Left ventricle myocardium inferior (tissue), 1 donor: ENCODE measurements at regions of chrX and their contacts with region 1.

Region 1: GRCh38 chrX:13487731-13488523 is 81.5 kb upstream of the EGFL6 start:
- DNase-seq: no peak
- H3K4me3 ChIP-seq: no peak overlapping the region
- H3K27ac ChIP-seq: peak overlapping the region; percentile 75
- H3K4me1 ChIP-seq: peaks cover 3% of the 10 kb centered on the region
- H3K27me3 ChIP-seq: no peaks in the 10 kb centered on the region
- CTCF ChIP-seq: peak; percentile 66

Region 2: DNA sequence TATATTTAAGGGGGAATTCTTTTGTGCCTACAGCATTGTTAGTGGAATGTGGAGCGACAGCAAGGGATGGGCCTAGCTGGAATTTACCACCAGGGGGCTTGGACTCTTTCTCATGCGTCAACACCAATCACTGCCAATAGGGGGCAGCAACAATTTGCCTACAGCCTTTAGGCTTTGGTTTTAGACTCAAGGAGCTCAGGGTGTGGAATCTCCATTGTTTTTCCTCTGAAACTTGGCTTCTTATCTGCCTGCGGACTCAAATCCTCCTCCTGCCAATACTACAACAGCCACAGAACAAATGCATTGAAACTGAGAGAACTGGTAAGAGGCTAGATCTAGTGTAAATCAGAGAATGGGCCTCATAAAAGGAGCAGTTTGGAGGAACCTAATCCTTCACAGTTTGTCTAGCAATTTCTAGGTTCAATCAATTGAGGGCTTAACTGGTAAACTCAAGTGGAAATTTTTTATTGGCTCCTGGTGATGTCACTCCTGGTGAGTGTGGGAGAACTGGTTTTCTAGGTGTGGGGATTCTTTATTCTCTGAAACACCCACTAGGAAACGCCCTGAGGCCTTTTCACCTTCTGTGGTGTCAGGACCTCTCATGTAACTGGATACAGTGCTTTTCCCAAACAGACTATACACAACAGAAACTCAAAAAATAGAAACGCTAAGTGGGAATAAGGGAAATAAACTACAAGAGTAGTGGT is 540.9 kb before region 1 on chrX:
- intact Hi-C with region 1: loop called (anchors 5 kb)
- DNase-seq: peak; percentile 40
- H3K4me3 ChIP-seq: no peak overlapping the region
- H3K27ac ChIP-seq: peak overlapping the region; percentile 66
- H3K4me1 ChIP-seq: peaks cover 15% of the 10 kb centered on the region
- H3K27me3 ChIP-seq: no peaks in the 10 kb centered on the region
- CTCF ChIP-seq: peak; percentile 82

Region 3: GRCh38 chrX:12974796-12975669 is 512.9 kb before region 1 on chrX and contains the start of gene TMSB4X:
- intact Hi-C with region 1: loop called (anchors 10 kb)
- DNase-seq: peak; percentile 83
- H3K4me3 ChIP-seq: peak within 1 kb of the TSS; percentile 80
- H3K27ac ChIP-seq: peak within 1 kb of the TSS; percentile 94
- H3K4me1 ChIP-seq: peaks cover 12% of the 10 kb centered on the region
- H3K27me3 ChIP-seq: no peaks in the 10 kb centered on the region
- CTCF ChIP-seq: no peak
- total RNA-seq, gene TMSB4X: 955 TPM

Region 4: DNA sequence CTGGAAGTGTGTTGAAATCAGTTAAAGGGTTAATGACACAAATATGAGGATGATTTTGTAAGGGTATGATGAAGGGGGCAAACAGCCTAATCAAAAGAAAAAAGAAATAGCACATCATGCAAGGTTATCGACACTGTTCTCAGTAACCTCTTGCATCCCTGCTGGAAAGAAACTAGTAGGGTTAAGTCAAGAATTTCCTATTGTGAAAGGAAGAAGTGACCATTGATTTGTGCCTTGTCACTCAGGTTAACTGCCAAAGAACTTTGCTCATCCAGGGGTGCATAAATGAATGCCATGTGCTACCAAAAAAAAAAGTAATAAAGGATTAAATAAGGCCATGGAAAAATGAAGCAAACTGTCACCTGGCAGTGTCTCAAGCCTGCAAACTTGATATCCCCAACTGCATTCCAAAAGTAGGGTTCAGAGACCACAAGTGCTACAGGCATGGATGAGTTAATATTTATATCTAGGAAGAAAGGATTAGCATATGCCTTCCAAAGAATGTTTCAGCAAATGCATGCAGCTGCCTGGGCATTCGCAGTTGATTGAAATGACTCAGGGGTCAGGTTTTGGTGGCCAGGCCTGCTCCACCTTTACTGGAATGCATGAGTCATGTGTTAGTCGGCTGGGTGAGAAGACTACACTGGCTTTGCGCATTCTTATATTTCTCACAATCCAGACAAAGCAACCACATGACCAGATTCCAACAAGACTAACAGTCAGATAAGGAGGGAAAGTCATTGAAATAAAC is 89.7 kb before region 1 on chrX:
- intact Hi-C with region 1: no loop called
- DNase-seq: no peak
- H3K4me3 ChIP-seq: no peak overlapping the region
- H3K27ac ChIP-seq: peak overlapping the region; percentile 23
- H3K4me1 ChIP-seq: peaks cover 5% of the 10 kb centered on the region
- H3K27me3 ChIP-seq: no peaks in the 10 kb centered on the region
- CTCF ChIP-seq: no peak